Heart right ventricle (tissue), 16 donors: ENCODE measurements at regions of chr19 and their contacts with region 1.

Region 1: DNA sequence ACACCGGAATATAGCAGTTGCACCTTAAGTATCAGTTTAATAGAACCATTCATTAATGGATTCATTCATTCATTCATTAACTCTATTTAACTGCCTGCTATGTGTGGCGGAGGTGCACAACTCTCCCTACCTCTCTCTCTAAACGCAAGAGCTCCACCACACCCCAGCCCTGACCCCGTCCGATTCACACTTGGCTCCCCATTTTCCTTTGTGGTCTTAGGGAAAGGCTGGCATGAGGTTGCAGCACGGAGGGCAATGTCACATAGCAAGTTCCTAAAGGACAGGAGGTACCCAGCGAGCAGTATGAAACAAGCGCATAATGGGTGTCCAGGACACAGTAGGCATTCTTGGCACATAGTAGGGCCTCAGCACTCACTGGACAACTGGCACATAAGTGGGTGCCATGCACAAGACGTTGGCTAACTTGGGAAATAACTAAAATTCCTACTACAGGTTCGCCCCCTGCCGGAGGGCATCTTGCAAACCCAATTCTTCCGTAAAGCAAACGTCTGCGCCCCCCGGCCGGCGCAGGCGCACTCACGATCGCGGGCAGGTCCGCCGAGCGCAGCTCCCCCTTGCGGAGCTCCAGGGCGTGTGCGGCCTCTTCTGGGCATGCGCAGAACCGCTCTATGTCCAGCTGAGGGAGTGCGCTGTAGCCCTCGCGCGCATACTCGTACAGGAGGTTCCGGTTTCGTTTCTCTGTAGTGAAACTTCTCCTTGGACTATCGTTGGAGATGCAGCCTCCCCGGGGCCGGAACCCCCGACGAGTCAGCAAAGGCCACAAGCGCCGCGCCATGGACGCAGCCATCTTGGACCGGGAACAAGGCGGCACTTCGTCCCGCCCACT is at the start of gene SARS2:
- DNase-seq: peak; percentile 91 to 93
- ATAC-seq: peak; percentile 87 to 95 (median 90)
- H3K4me3 ChIP-seq: peak within 1 kb of the TSS; percentile 64 to 93 (median 74)
- H3K27ac ChIP-seq: peak within 1 kb of the TSS; percentile 74 to 94 (median 88)
- H3K4me1 ChIP-seq: peaks cover 9 to 45% (median 30%) of the 10 kb centered on the region in 9 donors
- H3K27me3 ChIP-seq: no peaks in the 10 kb centered on the region
- CTCF ChIP-seq: peak; percentile 99 to 100 (median 100)
- total RNA-seq, gene SARS2: 14.7 to 21.9 (median 18.9) TPM

Region 2: GRCh38 chr19:37389234-37389633 is 1540.9 kb before region 1 on chr19:
- intact Hi-C with region 1: no loop called
- DNase-seq: no peak
- ATAC-seq: no peak
- H3K4me3 ChIP-seq: no peak overlapping the region
- H3K27ac ChIP-seq: no peak overlapping the region
- H3K4me1 ChIP-seq: no peaks in the 10 kb centered on the region
- H3K27me3 ChIP-seq: no peaks in the 10 kb centered on the region
- CTCF ChIP-seq: no peak

Region 3: DNA sequence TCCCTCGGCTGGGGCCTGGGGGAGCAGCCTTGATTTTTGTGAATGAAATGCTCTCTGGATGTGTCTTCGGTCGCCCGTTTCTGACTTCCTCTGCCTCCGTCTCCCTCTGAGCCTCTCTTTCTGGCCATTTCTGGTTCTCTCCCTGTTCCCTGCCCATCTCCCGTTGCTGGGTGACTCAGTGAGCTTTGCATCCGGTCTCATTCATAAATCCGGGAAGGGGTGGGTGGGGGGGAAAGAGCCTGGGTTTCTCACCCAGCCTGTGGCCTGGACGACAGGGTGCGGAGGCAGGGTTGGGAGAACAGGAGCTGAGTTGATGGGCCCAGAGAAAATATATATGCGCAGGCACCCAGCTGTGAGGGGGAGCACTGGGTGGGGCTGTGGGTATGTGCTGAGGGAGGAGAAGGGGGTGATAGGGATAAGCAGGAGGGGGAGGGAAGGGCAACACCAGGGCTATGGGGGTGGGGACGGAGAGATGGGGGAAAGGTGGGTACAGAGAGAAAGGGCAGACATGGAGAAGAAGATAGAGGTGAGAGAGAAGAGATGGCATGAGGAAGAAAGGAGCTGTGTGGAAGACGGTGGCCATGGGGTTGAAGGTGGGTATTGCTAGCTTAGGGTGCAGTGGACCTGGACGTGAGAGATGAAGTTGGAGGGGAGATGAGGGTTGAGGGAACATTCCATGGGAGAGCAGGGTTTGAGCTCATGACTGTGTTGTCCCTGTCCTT is 540.4 kb before region 1 on chr19:
- intact Hi-C with region 1: loop called in 1 of 10 experiments (anchors 10 kb)
- DNase-seq: no peak
- ATAC-seq: no peak
- H3K4me3 ChIP-seq: peak overlapping the region in 8 of 10 donors; percentile 33 to 64 (median 57)
- H3K27ac ChIP-seq: peak overlapping the region in 7 of 10 donors; percentile 22 to 87 (median 52)
- H3K4me1 ChIP-seq: peaks cover 15 to 56% (median 33%) of the 10 kb centered on the region in 9 donors
- H3K27me3 ChIP-seq: peaks cover 0 to 85% (median 12%) of the 10 kb centered on the region in 7 donors
- CTCF ChIP-seq: no peak

Region 4: DNA sequence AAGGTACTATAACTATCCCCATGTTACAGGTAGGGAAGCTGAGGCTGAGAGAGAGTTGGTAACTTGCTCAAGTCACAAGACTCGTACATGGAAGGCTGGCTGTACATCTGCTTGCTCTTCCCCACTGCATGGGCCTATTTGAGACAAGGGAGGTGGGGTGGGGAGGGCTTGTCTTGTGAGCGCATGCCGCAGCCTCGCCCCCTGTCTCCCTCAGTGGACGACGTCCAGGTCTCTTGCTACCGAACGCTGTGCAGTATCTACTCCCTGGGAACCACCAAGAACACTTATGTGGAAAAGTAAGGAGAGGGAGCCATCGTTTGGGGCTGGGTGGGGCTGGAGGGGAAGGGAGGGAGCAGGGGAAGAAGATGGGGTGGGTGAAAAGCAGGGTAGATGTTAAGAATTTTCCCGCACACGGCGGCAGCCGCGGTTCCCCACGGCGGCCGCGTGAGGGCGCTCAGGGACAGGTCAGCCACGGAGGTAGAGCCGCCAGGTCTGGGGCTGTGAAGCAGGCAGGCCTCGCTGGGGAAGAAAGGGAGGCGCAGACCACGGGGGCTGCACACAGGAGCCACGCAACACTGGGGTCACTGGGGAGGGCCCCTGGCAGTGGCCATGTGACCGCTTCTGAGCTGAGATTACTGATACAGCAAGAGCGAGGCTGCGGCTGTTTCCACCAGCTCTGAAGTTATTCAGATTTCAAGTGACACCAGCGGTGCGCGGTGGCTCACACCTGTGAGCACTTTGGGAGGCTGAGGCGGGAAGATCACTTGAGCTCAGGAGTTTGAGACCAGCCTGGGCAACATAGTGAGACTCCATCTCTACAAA is 415.1 kb before region 1 on chr19:
- intact Hi-C with region 1: loop called in 1 of 10 experiments (anchors 10 kb)
- DNase-seq: peak; percentile 32 to 67
- ATAC-seq: peak in 7 of 8 donors; percentile 73 to 85 (median 79)
- H3K4me3 ChIP-seq: peak overlapping the region in 1 of 10 donors; percentile 18
- H3K27ac ChIP-seq: no peak overlapping the region
- H3K4me1 ChIP-seq: peaks cover 0 to 7% (median 0%) of the 10 kb centered on the region in 9 donors
- H3K27me3 ChIP-seq: peaks cover 0 to 34% (median 6%) of the 10 kb centered on the region in 7 donors
- CTCF ChIP-seq: peak; percentile 61 to 90 (median 85)

Region 5: DNA sequence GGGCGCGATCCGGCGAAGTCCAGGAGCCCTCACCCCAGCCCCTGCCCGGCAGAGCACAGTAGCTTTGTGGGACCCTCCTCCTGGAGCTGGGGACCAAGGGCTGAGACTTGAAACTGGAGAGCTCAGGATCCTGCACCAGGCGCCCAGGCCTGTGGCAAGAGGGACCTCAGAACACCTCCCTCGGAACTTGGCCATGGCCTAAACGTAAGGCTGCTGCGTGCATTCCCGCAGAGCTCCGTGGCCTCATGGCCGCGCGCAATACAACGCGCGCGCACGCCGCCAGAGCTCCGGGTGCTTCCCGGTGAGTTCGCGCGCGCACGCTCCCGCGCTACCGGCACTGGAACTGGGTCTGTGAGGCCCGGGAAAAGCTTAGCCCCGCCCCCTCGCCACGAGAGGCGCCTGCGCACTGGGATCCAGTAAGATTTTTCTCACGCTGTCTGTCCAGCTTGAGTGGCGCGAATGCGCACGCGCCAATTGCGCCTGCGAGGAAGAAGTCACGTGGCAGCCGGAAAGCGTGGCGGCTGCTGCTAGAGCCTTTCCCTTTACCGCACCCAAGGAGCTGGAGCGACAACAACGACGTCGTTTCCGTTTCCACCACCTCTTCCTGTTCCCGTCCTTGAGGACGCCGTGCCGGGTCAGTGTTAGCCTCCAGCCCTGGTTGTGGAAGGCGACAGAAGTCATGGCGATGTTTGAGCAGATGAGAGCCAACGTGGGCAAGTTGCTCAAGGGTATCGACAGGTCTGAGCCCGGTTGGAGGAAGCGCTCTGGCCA is 311.4 kb before region 1 on chr19 and contains the start of gene EIF3K:
- intact Hi-C with region 1: loop called in 1 of 10 experiments (anchors 1 kb)
- DNase-seq: peak; percentile 99
- ATAC-seq: peak; percentile 94 to 99 (median 96)
- H3K4me3 ChIP-seq: peak within 1 kb of the TSS; percentile 69 to 98 (median 82)
- H3K27ac ChIP-seq: peak within 1 kb of the TSS; percentile 66 to 99 (median 92)
- H3K4me1 ChIP-seq: peaks cover 0 to 32% (median 24%) of the 10 kb centered on the region in 9 donors
- H3K27me3 ChIP-seq: no peaks in the 10 kb centered on the region
- CTCF ChIP-seq: no peak
- total RNA-seq, gene EIF3K: 505 to 677 (median 631) TPM

Region 6: GRCh38 chr19:38647368-38647965 is 282.7 kb before region 1 on chr19 and contains the start of gene ACTN4:
- intact Hi-C with region 1: loop called in 2 of 10 experiments (anchors 5 to 10 kb)
- DNase-seq: peak; percentile 99 to 100
- ATAC-seq: peak; percentile 84 to 95 (median 91)
- H3K4me3 ChIP-seq: peak within 1 kb of the TSS; percentile 74 to 99 (median 86)
- H3K27ac ChIP-seq: peak within 1 kb of the TSS; percentile 77 to 99 (median 96)
- H3K4me1 ChIP-seq: peaks cover 18 to 40% (median 36%) of the 10 kb centered on the region in 9 donors
- H3K27me3 ChIP-seq: no peaks in the 10 kb centered on the region
- CTCF ChIP-seq: no peak
- total RNA-seq, gene ACTN4: 129 to 291 (median 149) TPM

Region 7: DNA sequence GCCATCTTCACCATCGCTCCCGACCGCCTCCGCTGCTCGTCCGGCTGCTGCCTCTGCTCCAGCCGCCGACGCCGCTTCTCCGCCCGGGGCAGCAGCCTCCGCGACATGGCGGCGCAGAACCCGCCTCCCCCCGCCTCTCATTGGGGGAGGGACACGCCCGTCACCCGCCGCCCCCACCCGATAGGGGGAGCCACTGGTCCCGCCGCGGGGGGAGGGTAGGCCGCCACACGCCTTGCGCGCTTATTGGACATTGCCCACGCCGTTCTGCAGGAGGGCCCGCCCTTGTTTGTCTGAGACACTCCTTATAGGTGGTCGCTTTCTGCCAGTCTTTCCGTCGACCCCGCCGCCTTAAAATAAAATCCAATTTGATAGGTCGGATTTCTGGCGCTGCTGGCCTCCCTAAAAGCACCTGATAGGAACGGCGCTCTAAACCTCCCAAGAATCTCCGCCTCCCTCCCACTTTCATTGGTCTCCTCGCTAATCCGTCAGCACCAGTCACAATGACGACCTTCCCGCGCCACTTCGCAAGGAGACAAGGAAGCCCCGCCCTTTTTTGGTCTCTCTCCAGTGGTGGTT is 80.2 kb before region 1 on chr19 and contains the start of gene HNRNPL:
- intact Hi-C with region 1: loop called in 1 of 10 experiments (anchors 1 kb)
- DNase-seq: peak; percentile 99 to 100
- ATAC-seq: peak; percentile 72 to 86 (median 80)
- H3K4me3 ChIP-seq: peak within 1 kb of the TSS; percentile 80 to 98 (median 90)
- H3K27ac ChIP-seq: peak within 1 kb of the TSS; percentile 99 to 100 (median 100)
- H3K4me1 ChIP-seq: peaks cover 17 to 58% (median 46%) of the 10 kb centered on the region in 9 donors
- H3K27me3 ChIP-seq: no peaks in the 10 kb centered on the region
- CTCF ChIP-seq: peak in 8 of 9 donors; percentile 45 to 74 (median 64)
- total RNA-seq, gene HNRNPL: 134 to 196 (median 170) TPM